K562 (cell line): ENCODE measurements at regions of chr13 and their contacts with region 1.

Region 1: GRCh38 chr13:95552539-95553441 is at the start of gene CLDN10:
- DNase-seq: peak in 3 of 4 experiments; percentile 11 to 22 (median 13)
- ATAC-seq: peak; percentile 70
- H3K4me3 ChIP-seq: no peak within 1 kb of the TSS
- H3K27ac ChIP-seq: no peak within 1 kb of the TSS
- H3K4me1 ChIP-seq: peaks cover 0 to 7% of the 10 kb centered on the region in 2 experiments; a peak in 2 of 5 replicates
- H3K27me3 ChIP-seq: peaks cover 22 to 32% of the 10 kb centered on the region in 2 experiments
- CTCF ChIP-seq: no peak
- EP300 ChIP-seq: no peak
- POLR2A ChIP-seq: no peak
- RAD21 ChIP-seq: no peak
- polyA plus RNA-seq, gene CLDN10: not detected

Region 2: GRCh38 chr13:95494082-95494681 is 58.6 kb before region 1 on chr13:
- CTCF ChIA-PET with region 1: no interaction called
- POLR2A ChIA-PET with region 1: no interaction called
- in situ Hi-C with region 1: no loop called
- intact Hi-C with region 1: loop called (anchors 10 kb)
- DNase-seq: peak; percentile 32 to 62 (median 58)
- ATAC-seq: peak; percentile 61
- H3K4me3 ChIP-seq: no peak overlapping the region
- H3K27ac ChIP-seq: no peak overlapping the region
- H3K4me1 ChIP-seq: no peaks in the 10 kb centered on the region; a peak in 1 of 5 replicates
- H3K27me3 ChIP-seq: no peaks in the 10 kb centered on the region
- CTCF ChIP-seq: peak; percentile 34 to 56 (median 56); a peak in 3 of 6 replicates
- EP300 ChIP-seq: no peak
- POLR2A ChIP-seq: no peak
- RAD21 ChIP-seq: peak in 1 of 2 experiments; percentile 54; a peak in 2 of 4 replicates

Region 3: DNA sequence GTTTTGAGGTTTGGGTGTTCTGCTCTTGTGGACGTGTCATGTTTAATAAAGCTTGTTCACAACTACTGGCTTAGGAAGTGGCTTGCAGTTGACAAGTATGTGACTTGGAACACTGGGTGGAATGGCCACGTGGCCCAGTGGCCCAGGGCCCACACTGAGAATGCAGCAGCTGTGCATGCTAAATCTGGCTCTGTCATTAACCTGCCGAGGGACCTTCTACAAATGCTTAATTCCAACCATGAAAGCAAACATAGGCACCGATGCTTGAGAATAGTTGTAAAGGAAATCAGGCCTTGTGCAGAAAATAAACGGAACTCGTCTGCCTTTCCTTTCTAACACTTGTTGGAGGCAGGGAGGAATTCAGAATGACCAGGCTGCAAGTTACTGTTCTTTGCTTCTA is 11.9 kb before region 1 on chr13:
- CTCF ChIA-PET with region 1: no interaction called
- POLR2A ChIA-PET with region 1: no interaction called
- in situ Hi-C with region 1: no loop called
- intact Hi-C with region 1: no loop called
- DNase-seq: no peak
- ATAC-seq: no peak
- H3K4me3 ChIP-seq: no peak overlapping the region
- H3K27ac ChIP-seq: no peak overlapping the region
- H3K4me1 ChIP-seq: no peaks in the 10 kb centered on the region; a peak in 1 of 5 replicates
- H3K27me3 ChIP-seq: no peaks in the 10 kb centered on the region
- CTCF ChIP-seq: no peak
- EP300 ChIP-seq: no peak
- POLR2A ChIP-seq: no peak
- RAD21 ChIP-seq: no peak